ENCODE measurements at regions of chr18 and their contacts with region 1.

Region 1: GRCh38 chr18:74342416-74343043 is 26.9 kb downstream of the C18orf63 start:
- DNase-seq: peak; percentile 58
- ATAC-seq: no peak
- H3K4me3 Mint-ChIP-seq: no peak overlapping the region
- H3K27ac Mint-ChIP-seq: no peak overlapping the region
- H3K4me1 Mint-ChIP-seq: no peaks in the 10 kb centered on the region
- H3K27me3 Mint-ChIP-seq: peaks cover 27% of the 10 kb centered on the region

Region 2: DNA sequence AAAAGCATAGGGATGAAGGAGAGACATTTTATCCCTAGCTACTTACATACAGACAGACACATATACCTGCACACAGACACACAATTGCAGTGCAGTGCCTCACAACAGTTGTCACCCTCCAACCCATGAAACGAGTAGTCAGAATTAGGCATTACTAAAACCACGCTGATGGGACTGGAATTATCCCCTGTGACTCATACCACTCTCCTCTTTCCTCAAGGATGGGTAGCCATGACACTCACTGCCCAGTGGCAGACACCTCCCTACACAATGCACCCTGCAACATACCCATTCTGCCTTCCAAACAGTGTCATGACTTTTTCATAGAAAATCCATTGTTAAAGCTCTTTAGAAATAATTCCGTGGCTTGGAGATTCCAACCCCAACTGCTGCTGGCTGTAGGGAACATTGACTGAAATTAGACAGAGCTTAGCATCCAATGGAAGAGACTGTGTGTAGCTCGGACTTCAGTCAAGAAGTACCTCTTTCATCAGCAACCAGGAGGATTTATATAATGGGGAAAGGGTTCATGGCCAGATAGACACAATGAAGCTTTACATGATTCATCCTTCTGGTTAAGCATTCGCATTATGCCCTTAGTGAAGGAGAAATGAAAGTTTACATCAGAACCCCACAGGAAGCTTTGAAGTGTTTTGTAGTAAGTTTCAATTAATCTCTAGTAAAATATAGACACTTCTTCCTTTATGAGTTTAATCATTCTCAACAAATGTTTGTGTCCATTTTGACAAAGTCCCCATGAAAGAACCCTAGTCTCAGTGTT is 350.1 kb before region 1 on chr18:
- CTCF ChIA-PET with region 1: no interaction called
- POLR2A ChIA-PET with region 1: no interaction called
- DNase-seq: no peak
- ATAC-seq: no peak
- H3K4me3 Mint-ChIP-seq: no peak overlapping the region
- H3K27ac Mint-ChIP-seq: peak overlapping the region; percentile 17
- H3K4me1 Mint-ChIP-seq: no peaks in the 10 kb centered on the region
- H3K27me3 Mint-ChIP-seq: peaks cover 3% of the 10 kb centered on the region

Region 3: GRCh38 chr18:74196220-74197119 is 146.1 kb before region 1 on chr18:
- CTCF ChIA-PET with region 1: interaction called, 39 read pairs
- POLR2A ChIA-PET with region 1: no interaction called
- DNase-seq: peak; percentile 67
- ATAC-seq: peak; percentile 92
- H3K4me3 Mint-ChIP-seq: peak overlapping the region; percentile 53
- H3K27ac Mint-ChIP-seq: no peak overlapping the region
- H3K4me1 Mint-ChIP-seq: peaks cover 6% of the 10 kb centered on the region
- H3K27me3 Mint-ChIP-seq: peaks cover 11% of the 10 kb centered on the region

Region 4: DNA sequence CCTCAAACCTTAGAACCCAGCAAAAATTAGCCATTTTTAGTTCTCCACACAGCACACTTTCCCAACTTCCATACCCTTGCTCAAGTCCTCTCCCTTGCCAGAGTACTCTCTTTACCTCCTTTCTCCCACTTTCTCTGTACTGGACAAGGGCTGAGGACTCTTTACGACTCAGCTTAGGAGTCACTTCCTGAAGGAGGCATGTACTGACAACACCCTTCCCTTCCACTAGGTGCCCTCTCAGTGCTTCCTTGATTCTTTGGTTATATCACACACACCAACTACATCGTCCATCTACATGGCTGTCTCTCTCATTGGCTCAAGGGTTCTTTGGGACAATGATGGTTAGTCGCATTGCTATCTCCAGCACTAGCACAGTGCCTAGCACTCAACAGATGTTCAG is 32.1 kb before region 1 on chr18:
- CTCF ChIA-PET with region 1: interaction called, 21 read pairs
- POLR2A ChIA-PET with region 1: no interaction called
- DNase-seq: peak; percentile 37
- ATAC-seq: peak; percentile 92
- H3K4me3 Mint-ChIP-seq: no peak overlapping the region
- H3K27ac Mint-ChIP-seq: no peak overlapping the region
- H3K4me1 Mint-ChIP-seq: no peaks in the 10 kb centered on the region
- H3K27me3 Mint-ChIP-seq: peaks cover 32% of the 10 kb centered on the region